ENCODE measurements at regions of chr5 and their contacts with region 1.

Region 1: GRCh38 chr5:118791926-118792734 is 196.2 kb downstream of the DTWD2 start:
- DNase-seq: peak; percentile 69
- H3K4me3 Mint-ChIP-seq: no peak overlapping the region
- H3K27ac Mint-ChIP-seq: no peak overlapping the region
- H3K4me1 Mint-ChIP-seq: no peaks in the 10 kb centered on the region
- H3K27me3 Mint-ChIP-seq: no peaks in the 10 kb centered on the region

Region 2: DNA sequence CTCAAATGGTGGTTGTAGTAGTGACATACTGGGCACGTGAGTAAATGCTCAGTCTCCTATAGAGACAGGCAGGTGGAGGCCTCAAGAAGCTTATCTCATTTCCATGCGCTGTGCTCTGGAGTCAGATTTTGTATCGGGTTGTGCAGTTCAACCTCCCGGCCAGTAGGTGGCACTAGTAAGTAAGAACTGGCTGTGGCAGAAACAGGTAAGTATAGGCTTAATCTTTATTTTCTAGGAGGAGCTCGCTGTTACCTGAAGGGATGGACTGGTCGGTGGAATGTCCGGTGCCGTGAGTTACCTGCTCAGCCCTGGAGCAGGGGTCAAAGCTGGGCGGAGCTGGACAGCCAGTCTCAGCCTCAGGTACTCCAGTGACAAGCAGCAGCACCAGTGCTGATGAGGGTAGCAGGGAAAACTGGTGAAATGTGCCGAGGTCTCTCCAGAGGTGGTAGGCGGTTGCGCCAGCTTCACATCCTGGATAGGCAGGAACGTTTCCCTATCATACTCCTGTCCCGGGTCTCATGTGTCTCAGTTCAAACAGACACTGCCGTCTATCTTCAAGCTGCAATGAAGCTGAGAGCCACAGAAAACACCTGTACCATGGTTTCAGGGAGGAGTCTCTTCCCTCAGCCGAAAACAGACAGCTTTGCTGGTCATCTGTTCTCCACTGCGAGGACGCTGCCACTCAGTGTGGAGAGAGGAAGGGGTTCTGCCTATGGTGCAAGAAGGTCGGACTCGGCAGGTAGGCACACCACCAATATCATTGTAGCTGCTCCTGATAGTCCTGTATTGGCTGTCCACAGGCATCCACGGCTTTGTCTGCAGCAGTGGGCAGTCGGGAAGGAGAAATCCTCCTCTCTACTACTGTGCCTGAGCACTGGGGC is 1337.2 kb before region 1 on chr5:
- intact Hi-C with region 1: loop called (anchors 2 kb)
- DNase-seq: peak; percentile 82
- H3K4me3 Mint-ChIP-seq: peak overlapping the region; percentile 61
- H3K27ac Mint-ChIP-seq: no peak overlapping the region
- H3K4me1 Mint-ChIP-seq: peaks cover 7% of the 10 kb centered on the region
- H3K27me3 Mint-ChIP-seq: no peaks in the 10 kb centered on the region